ENCODE measurements at regions of chr2 and their contacts with region 1.

Region 1: DNA sequence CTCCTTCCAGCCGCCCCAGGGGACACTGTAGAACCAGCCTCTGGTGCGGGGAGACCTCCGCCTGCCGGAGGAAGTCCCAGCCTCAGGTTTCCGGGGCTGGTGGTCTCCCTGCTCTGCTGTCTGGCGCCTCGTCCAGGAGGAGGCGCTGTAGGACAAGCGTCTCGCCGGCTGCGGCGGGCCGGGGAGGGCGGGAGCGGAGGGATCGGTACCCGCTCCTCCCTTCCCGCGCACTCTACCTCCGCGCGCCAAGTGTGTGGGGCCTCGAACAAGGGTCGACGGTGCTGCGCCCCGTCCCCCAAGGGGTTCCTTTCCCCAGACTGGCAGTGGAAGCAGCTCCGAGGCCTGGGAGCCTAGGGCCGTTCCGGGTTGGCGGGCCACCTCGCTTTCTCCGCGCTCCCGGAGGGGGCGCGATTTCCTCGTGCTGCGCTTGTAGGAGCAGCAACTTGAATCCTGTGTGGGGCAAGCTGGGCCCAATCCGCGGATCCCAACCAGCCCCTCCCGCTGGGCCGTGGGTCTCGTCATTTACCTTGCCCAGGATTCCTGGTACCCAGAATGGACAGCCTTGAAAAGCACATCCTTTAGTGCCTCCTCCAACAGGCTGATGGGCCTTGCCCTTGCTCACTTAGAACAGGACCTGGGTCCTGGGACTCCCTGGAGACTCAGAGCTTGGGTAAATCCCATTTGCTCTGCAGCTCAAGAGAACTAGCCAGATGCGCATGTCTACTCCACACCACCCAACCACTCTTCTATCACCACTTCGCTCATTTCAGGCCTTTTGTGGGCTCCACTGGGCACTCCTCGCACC is 10.6 kb upstream of the HOXD4 start:
- DNase-seq: peak in 1 of 2 donors; percentile 85
- H3K4me3 ChIP-seq: peak overlapping the region; percentile 58 to 64
- H3K27ac ChIP-seq: peak overlapping the region; percentile 44 to 56
- H3K4me1 ChIP-seq: peaks cover 0 to 8% of the 10 kb centered on the region in 2 donors
- H3K27me3 ChIP-seq: no peaks in the 10 kb centered on the region
- CTCF ChIP-seq: peak; percentile 93 to 98 (median 96)

Region 2: DNA sequence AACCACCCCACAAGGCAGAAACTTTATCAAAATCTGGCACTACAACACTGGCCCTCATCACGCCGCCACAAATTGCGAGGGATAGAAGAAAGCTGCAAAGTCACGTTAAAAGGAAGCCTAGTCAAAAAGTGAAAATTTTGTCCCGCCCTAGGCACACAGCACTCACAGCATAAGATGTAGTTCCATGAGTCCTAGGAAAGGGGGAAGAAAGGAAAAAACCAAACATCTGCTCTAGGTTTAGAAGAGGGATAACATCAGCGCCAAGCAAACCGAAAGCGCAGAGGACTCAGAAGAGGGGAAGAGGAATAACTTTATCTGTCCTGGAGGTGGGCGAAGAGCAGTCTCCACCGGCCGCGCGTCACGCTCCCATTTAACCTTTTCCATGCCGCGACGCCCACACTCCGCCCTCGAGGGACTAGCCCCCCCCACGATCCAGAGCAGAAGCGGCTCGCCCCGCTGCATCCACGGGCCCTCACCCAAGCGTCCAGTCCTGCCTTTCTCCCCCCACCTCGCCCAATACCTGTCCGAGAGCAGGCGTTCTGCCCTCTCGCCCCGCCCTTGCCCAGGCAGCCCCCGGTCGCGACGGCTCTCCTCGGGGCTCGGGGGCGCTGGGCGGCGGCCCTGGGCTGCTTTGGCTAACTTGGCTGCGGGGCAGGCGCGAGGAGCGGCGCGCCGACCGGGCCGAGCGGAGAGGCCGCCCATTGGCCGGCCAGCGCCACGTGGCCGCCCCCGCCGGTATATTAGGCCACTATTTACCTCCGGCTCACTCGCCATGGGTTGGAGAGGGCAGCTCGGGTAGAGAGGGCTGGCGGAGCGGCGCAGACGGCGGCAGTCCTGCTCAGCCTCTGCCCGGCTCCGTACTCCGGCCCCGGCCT is 47.4 kb after region 1 on chr2 and contains the start of gene HOXD1:
- intact Hi-C with region 1: loop called (anchors 5 kb)
- DNase-seq: no peak
- H3K4me3 ChIP-seq: peak within 1 kb of the TSS; percentile 79
- H3K27ac ChIP-seq: no peak within 1 kb of the TSS
- H3K4me1 ChIP-seq: peaks cover 3 to 12% of the 10 kb centered on the region in 2 donors
- H3K27me3 ChIP-seq: peaks cover 6% of the 10 kb centered on the region
- CTCF ChIP-seq: no peak
- total RNA-seq, gene HOXD1: 9.8 TPM

Region 3: GRCh38 chr2:176269319-176270099 is 128.8 kb after region 1 on chr2 and contains the start of gene MTX2:
- intact Hi-C with region 1: loop called (anchors 5 kb)
- DNase-seq: peak in 1 of 2 donors; percentile 73
- H3K4me3 ChIP-seq: peak within 1 kb of the TSS; percentile 69 to 100
- H3K27ac ChIP-seq: peak within 1 kb of the TSS; percentile 79 to 80
- H3K4me1 ChIP-seq: peaks cover 0 to 2% of the 10 kb centered on the region in 2 donors
- H3K27me3 ChIP-seq: no peaks in the 10 kb centered on the region
- CTCF ChIP-seq: peak in 1 of 3 experiments; percentile 8
- total RNA-seq, gene MTX2: 8.5 TPM

Region 4: DNA sequence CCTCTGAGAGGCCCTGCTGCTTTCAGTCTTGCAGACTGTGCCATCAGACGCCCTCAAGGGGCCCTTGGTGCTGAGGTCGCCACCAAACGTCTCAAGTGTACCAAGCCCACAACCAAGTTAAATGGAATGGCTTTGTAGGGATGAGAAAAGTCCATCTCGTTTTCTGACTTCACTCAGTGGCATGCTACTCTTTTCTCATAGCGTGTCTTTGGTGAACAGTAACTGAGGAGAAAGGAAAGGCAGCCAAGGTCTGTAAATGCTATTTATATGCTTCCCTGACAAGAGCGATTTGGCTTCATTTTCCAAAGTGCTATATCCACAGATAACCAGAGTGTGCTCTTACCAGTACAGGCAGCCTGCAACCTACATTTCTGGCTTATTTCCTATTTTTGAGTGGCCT is 251.5 kb after region 1 on chr2:
- intact Hi-C with region 1: loop called (anchors 5 kb)
- DNase-seq: no peak
- H3K4me3 ChIP-seq: no peak overlapping the region
- H3K27ac ChIP-seq: peak overlapping the region; percentile 57 to 66
- H3K4me1 ChIP-seq: peaks cover 0 to 22% of the 10 kb centered on the region in 2 donors
- H3K27me3 ChIP-seq: no peaks in the 10 kb centered on the region
- CTCF ChIP-seq: no peak

Region 5: DNA sequence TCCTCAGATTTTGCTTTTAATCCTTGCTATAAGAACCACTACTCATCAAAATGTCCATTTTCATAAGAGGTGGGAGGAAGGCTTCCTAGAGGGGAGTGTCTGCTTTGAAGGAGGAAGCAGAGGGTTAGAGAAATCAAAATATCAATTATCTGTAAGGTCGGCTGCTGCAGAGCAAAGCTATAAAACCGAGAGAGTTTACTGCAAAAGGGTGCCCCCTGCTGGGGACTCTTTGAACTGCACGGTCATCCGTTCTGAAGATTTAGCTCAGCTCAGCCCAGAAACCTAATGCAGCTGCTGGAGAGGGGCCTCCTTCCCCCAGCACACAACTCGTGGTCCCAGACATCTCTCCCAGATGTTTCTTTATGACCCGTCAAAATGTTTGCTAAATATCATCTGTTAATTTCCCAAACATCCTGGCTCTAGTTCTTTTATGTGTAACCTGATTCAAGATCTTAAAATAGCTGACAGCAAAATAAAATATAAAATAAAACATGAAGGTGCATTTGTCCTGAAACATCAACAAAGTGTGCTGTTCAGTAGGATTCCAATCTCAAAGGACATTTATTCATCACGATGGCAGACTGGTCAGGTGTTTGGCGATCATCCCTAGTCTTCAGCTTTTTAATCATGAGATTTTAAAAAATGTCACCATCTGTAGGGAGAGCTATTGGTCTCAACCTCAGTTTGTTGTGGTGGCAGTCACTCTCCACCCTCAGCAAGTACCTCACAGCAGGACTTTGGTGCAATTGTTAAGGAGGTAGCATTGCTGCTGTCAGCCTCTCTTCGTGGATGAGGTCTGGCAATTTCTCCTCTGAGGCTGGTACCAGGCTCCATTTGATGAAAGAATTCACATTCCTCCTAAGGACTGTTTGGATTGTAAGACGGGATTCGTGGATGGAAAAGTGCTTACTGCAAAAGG is 314.4 kb after region 1 on chr2:
- intact Hi-C with region 1: loop called (anchors 1 kb)
- DNase-seq: peak in 1 of 2 donors; percentile 90
- H3K4me3 ChIP-seq: no peak overlapping the region
- H3K27ac ChIP-seq: no peak overlapping the region
- H3K4me1 ChIP-seq: no peaks in the 10 kb centered on the region
- H3K27me3 ChIP-seq: no peaks in the 10 kb centered on the region
- CTCF ChIP-seq: peak; percentile 59 to 91 (median 83)

Region 6: GRCh38 chr2:176554101-176555048 is 413.7 kb after region 1 on chr2:
- intact Hi-C with region 1: loop called (anchors 1 kb)
- DNase-seq: peak in 1 of 2 donors; percentile 65
- H3K4me3 ChIP-seq: peak overlapping the region; percentile 52 to 59
- H3K27ac ChIP-seq: peak overlapping the region; percentile 64 to 66
- H3K4me1 ChIP-seq: peaks cover 7 to 11% of the 10 kb centered on the region in 2 donors
- H3K27me3 ChIP-seq: no peaks in the 10 kb centered on the region
- CTCF ChIP-seq: peak; percentile 71 to 85 (median 81)

Region 7: DNA sequence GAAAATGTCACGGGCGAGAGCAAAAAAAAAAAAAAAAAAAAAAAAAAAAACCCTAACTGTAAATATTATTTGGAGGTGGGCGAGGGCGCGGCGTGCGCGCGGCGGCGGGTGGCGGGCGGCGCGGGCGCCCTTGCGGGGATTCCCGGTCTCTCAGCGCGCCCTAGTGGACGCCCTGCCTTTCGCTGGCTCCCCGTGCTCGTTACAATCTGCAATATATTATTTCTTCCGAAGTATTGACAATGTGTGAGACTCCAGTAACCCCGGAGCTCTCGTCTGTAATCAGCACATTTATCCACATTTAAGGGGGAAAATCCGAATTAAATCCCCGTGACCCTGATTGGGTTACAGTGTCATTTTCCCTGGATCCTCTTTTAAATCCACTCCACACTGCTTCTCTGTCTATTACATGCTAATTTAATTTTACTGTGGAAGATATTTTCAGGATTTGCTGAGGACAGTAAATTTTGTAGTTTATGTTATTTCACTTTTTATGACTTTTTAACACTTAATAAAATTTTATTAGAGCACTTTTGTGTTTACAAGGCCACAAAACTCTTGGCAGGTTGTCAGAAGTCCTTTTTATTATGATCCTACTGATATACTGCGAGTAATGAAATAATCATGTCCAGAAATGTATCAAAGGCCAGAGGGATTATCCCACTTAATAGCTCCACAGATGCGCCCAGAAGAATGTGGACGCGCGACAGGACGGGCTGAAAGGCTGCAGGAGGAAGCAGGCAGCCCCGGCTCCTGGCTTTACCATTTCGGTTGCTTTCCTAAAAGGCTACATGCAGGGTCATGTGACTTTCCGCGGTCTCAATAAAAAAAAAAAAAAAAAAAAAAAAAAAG is 497.7 kb after region 1 on chr2:
- intact Hi-C with region 1: loop called (anchors 1 kb)
- DNase-seq: peak in 1 of 2 donors; percentile 78
- H3K4me3 ChIP-seq: peak overlapping the region; percentile 77 to 83
- H3K27ac ChIP-seq: peak overlapping the region in 1 of 2 donors; percentile 56
- H3K4me1 ChIP-seq: peaks cover 3 to 5% of the 10 kb centered on the region in 2 donors
- H3K27me3 ChIP-seq: no peaks in the 10 kb centered on the region
- CTCF ChIP-seq: peak; percentile 30 to 63 (median 60)

Measured in ascending aorta (tissue), 2 donors.